ENCODE measurements at regions of chr15 and their contacts with region 1.

Region 1: DNA sequence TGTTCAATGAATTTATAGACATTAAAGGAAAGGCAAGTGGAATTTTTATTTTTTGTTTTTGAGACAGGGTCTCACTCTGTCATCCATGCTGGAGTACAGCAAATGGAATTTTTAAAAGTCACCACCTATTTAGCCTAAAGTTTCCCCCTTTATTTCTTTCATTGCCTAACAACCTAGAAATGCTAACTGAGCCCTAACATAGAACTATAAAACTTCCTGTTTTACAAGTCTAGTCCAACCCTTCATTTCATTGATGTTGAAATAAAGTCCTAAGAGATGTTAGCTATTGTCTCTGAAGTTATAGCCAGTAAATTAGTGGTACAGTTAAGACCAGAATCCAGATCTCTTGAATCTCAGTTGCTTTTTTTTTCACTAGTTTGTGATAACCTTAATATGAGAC is 39.0 kb downstream of the MAPK6 start:
- DNase-seq: no peak

Region 2: DNA sequence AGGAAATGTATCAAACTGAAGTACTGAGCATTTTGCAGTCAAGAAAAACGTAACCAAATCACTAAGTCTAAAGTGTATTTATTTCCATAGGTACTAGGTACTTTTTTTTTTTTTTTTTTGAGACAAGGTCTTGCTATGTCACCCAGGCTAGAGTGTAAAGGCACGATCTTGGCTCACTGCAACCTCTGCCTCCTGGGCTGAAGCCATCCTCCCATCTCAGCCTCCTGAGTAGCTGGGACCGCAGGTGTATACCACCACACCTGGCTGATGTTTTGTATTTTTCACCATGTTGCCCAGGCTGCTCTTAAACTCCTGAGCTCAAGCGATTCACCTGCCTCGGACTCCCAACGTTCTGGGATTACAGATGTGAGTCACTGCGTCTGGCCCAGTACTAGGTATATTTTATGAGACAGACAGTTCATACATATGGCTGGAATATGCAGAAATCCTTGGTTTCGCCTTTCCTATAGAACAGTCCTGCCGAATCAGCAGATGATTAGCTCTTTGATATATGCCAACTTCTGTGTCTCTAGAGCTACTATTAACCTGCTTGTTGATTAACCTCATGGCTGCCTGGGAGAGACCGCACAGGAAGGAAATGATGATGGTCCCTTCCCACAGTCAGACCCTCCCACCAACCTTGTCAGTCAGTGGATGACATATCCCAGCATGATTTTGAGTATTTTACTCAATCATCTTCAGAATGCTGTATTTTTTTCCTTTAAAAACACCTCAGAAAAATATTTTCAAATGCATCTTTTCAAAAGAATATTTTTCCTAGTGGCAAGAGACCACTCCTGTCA is 196.2 kb before region 1 on chr15:
- intact Hi-C with region 1: no loop called
- DNase-seq: no peak

Region 3: GRCh38 chr15:51966192-51966591 is 91.8 kb before region 1 on chr15:
- intact Hi-C with region 1: loop called in 1 of 2 experiments (anchors 2 kb)
- DNase-seq: no peak

Region 4: DNA sequence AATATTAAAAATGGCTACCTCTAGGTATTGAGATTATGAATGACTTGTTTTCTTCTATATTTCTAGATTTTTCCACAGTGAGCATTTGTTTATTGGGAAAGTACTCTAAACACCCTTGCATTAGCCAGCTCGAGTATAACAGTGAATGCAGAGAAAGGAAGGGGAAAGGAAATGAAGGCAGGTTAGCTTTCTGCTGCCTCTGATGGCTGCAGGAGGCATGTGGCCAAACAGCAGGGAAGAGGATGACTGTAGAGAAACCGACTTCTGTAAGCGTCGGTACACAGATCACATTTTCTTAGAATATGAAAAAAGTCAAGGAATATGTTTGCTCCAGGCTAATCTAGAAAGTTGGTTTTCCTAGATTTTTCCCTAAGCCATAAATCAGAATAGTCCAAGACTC is 113.4 kb after region 1 on chr15:
- intact Hi-C with region 1: no loop called
- DNase-seq: no peak

Measured in posterior vena cava (tissue), 2 donors.